Left cardiac atrium (tissue), 4 donors: ENCODE measurements at regions of chr7 and their contacts with region 1.

Region 1: DNA sequence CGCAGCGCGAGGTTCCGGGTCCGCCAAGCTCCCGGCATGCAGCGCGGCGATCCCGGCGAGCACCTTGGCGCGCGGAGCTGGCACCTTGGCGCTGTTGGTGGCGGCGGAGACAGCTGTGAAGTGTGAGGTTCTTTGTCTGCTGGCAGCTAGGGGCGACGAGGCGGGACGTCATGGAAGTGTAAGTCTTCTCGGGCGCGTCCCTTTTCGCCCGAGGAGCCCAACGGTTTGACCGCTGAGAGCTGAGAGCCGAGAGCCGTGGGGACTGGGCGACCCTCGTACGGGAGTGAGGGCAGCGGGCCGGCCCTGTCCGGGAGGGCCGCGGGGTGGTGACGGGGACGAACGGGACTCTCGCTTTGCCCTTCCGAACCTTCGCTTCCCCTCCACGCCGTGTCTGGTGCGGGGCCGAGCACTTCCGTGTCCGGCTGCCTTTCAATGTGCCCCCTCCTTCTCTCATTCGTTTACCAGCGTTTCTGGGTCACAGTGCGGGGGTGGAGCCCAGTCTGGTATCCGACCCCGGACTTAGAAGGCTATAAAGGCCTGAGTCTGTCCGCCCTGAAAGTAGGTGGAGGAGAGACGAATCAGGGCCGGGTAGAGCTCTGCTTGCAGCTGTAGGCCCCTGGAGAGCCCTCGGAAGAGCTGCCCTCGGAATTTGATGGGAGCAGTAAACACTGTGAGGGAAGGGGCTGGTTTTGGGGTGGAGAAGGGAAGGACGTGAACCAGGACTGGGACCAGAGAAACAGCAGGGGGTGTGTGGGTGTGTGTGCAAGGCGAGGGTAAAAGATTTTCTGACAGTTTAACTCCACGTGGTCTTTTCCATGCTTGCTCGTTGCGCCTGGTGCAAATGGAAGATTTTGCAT is at the start of gene CRCP:
- DNase-seq: peak; percentile 84
- ATAC-seq: peak; percentile 95 to 96
- total RNA-seq, gene CRCP: 25.7 to 27.4 TPM

Region 2: GRCh38 chr7:64802699-64803098 is 1312.3 kb before region 1 on chr7:
- intact Hi-C with region 1: no loop called
- DNase-seq: no peak
- ATAC-seq: no peak

Region 3: GRCh38 chr7:66055321-66055956 is 59.6 kb before region 1 on chr7:
- intact Hi-C with region 1: no loop called
- DNase-seq: no peak
- ATAC-seq: no peak

Region 4: GRCh38 chr7:66075590-66076461 is 39.2 kb before region 1 on chr7 and contains the start of gene ASL:
- intact Hi-C with region 1: loop called in 1 of 2 experiments (anchors 5 kb)
- DNase-seq: peak; percentile 96
- ATAC-seq: peak; percentile 100
- total RNA-seq, gene ASL: 11.1 to 14.7 TPM

Region 5: DNA sequence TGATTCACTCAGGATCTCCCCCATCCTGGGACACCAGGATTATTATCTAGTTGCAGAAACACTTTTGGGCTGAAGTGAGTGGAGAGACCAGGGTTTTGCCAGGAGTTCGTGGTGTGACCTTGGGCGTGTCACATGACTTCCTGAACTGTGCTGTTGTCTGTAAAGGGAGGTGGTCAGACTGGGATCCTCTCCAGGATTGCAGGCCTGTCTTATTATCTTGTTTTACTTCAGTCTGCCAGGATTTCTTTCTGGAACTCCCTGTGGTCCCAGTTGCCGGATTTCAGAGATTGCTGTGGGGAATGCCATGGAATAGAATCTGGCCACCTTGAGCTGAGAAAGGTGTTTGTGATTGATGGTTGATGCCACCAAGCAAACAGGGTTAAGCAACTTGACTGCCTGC is 35.5 kb after region 1 on chr7:
- intact Hi-C with region 1: no loop called
- DNase-seq: peak; percentile 79
- ATAC-seq: peak; percentile 58 to 80